Naive thymus-derived CD4-positive, alpha-beta T cell (primary cell): ENCODE measurements at regions of chr17 and their contacts with region 1.

Region 1: GRCh38 chr17:42361781-42362186 is 26.5 kb downstream of the STAT3 start:
- DNase-seq: peak in 1 of 9 donors; percentile 32
- ATAC-seq: peak; percentile 71
- H3K4me3 ChIP-seq: no peak overlapping the region
- H3K4me3 Mint-ChIP-seq: peak overlapping the region in 4 of 10 donors; percentile 3 to 45 (median 23)
- H3K27ac ChIP-seq: no peak overlapping the region
- H3K27ac Mint-ChIP-seq: peak overlapping the region in 8 of 9 donors; percentile 12 to 80 (median 46)
- H3K4me1 ChIP-seq: peaks cover 34 to 38% of the 10 kb centered on the region in 2 donors
- H3K4me1 Mint-ChIP-seq: peaks cover 47 to 83% (median 72%) of the 10 kb centered on the region in 7 donors
- H3K27me3 ChIP-seq: no peaks in the 10 kb centered on the region
- H3K27me3 Mint-ChIP-seq: no peaks in the 10 kb centered on the region

Region 2: DNA sequence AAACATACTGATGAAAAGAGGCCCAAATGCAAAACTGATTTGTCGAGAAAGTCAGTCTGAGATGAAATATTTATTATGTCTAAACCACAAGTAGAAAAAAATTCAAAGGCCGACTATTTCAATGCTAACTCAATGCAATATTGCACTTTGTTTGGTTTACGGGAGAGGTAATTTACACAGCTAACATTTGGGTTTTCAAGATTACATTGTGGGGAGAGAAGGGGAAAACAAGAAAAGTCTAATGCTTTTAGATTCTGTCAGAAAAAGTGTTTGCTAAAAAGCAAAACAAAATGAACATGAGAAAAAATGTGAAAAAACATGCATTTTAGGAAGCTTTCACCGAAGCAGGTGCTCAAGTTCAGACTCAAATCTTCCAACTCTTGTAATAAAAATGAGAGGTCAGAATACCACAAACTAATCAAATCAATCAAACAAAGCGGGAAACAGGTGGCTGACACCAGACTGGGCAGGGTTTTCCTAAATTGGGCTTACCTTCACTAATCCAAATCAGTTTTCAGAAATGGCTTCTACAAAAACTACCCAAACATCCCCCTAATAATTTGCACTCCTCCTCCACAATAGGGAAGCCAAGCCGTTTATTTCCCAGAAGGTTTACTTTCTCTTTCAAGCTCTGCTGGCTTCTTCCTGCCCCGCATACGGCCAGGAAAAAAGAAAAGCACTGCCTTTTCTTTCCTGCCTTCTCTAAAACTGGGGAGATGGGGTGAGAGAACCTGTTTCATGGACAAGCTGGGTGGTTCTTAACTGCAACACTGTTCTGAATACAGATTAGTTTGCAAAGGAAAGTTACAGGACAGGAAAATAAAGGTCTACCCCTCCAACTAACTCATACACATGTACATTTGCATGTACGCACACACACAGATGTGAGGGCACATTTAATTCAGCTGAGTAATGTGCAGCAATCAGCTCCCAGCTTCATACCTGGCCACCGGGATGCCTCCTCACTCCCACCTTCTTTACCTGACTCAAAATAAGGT is 17.1 kb after region 1 on chr17:
- CTCF ChIA-PET with region 1: no interaction called
- POLR2A ChIA-PET with region 1: interaction called, 3 read pairs
- intact Hi-C with region 1: loop called in 1 of 2 experiments (anchors 2 kb)
- DNase-seq: peak in 1 of 9 donors; percentile 27
- ATAC-seq: peak; percentile 55
- H3K4me3 ChIP-seq: peak overlapping the region; percentile 34
- H3K4me3 Mint-ChIP-seq: peak overlapping the region; percentile 69 to 90 (median 82)
- H3K27ac ChIP-seq: peak overlapping the region; percentile 58
- H3K27ac Mint-ChIP-seq: peak overlapping the region; percentile 63 to 89 (median 86)
- H3K4me1 ChIP-seq: peaks cover 16 to 21% of the 10 kb centered on the region in 2 donors
- H3K4me1 Mint-ChIP-seq: peaks cover 42 to 82% (median 73%) of the 10 kb centered on the region in 7 donors
- H3K27me3 ChIP-seq: no peaks in the 10 kb centered on the region
- H3K27me3 Mint-ChIP-seq: no peaks in the 10 kb centered on the region